H1 (cell line): ENCODE measurements at regions of chr4 and their contacts with region 1.

Region 1: GRCh38 chr4:139768896-139769295 is 103.3 kb downstream of the MGST2 start:
- DNase-seq: peak in 1 of 2 experiments; percentile 47
- H3K4me3 ChIP-seq: no peak overlapping the region
- H3K27ac ChIP-seq: no peak overlapping the region
- H3K4me1 ChIP-seq: no peaks in the 10 kb centered on the region
- H3K27me3 ChIP-seq: no peaks in the 10 kb centered on the region
- CTCF ChIP-seq: peak in 2 of 3 experiments; percentile 62 to 65; a peak in 3 of 4 replicates
- EP300 ChIP-seq: no peak
- POLR2A ChIP-seq: no peak
- RAD21 ChIP-seq: peak; percentile 56 to 72

Region 2: DNA sequence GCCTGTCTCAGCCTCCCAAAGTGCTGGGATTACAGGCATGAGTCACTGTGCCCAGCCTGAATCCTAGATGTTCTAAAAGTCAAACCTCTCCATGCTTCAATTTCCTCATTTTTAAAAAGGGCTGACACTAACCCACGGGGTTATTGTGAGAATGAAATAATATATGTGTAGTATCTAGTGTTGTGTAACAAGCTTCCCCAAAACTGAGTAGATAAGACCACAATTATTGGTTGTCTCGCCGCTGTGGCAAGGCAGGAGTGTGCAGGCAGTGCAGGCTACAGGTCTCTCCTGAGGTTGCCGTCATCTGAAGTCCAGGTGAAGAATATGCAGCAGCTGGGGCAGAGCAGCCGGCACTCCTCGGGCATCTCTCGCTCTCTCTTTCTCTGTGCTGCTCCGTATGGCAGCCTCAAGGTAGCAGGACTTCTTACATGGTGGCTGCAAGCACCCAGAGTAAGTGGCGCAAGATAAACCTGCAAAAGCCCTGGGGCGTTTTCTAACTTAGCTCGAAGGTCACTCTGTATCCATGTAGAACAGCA is 284.0 kb before region 1 on chr4:
- CTCF ChIA-PET with region 1: no interaction called
- POLR2A ChIA-PET with region 1: no interaction called
- DNase-seq: no peak
- H3K4me3 ChIP-seq: no peak overlapping the region
- H3K27ac ChIP-seq: no peak overlapping the region
- H3K4me1 ChIP-seq: no peaks in the 10 kb centered on the region
- H3K27me3 ChIP-seq: no peaks in the 10 kb centered on the region
- CTCF ChIP-seq: no peak
- EP300 ChIP-seq: no peak
- POLR2A ChIP-seq: no peak
- RAD21 ChIP-seq: no peak

Region 3: DNA sequence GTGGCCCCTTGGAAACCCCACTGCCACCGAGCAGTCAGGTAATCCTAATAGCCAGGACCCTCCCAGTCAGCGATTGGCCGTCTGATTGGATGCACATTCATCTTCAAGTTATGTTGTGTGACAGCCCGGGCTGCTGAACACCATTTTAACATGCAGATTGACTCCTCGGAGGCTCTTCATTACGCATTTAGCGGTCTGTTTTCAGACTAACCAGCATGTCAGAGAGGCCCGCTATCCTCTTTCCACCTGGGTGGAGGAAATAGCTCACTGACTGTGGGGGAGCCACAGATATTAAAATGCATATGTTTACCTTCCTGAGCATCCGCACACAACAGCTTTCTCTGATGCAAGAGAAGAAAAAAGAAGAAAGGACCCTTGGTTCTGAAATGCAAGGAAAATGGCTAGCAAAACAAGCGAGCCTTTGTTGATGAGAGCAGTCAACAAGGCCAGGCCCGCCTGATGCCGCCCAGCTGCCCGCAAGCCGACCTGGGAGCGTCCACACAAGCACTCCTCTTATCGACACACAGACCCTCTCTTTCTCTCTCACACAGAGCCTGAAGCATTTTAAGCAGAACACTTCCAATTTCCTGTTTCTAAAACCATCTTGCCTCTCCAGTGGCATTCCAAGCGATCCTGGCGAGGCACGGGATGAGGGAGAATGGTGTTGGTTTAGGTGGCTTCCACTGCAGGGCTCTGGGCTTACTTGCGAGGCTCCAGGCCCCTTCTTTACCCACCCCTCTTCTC is 15.0 kb after region 1 on chr4:
- CTCF ChIA-PET with region 1: interaction called, 10 read pairs
- POLR2A ChIA-PET with region 1: no interaction called
- DNase-seq: no peak
- H3K4me3 ChIP-seq: no peak overlapping the region
- H3K27ac ChIP-seq: no peak overlapping the region
- H3K4me1 ChIP-seq: peaks cover 5 to 10% (median 6%) of the 10 kb centered on the region in 4 experiments; a peak in 5 of 7 replicates
- H3K27me3 ChIP-seq: no peaks in the 10 kb centered on the region
- CTCF ChIP-seq: no peak
- EP300 ChIP-seq: no peak
- POLR2A ChIP-seq: no peak
- RAD21 ChIP-seq: no peak